Endothelial cell of umbilical vein (primary cell): ENCODE measurements at regions of chr5 and their contacts with region 1.

Region 1: DNA sequence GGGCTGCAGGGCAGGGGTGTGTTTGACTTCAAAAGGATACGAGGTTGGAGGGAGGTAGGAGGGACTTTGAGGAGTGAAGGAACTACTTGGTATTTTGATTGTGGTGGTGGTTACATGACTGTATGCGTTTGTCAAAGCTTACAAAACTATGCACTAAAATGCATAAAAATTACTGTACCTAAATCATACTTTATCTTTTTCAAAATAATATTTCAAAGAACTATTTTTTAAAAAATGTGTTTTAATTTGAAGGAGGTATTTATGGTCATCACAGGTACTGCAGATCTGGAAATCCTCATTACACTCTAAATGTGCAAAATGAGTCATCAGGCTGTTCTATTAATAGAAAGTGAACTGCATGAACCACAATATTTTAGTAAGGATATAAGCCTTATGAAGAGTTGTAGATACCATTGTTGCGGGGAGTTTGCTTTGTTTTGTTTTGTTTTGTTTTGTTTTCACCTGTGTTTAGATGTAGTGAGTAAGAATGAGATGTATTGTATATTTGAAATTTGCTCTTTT is 116.9 kb downstream of the ARRDC3 start:
- DNase-seq: peak; percentile 77
- H3K4me3 ChIP-seq: no peak overlapping the region
- H3K27ac ChIP-seq: peak overlapping the region; percentile 11
- H3K4me1 ChIP-seq: peaks cover 10% of the 10 kb centered on the region
- H3K27me3 ChIP-seq: no peaks in the 10 kb centered on the region
- CTCF ChIP-seq: no peak
- POLR2A ChIP-seq: no peak

Region 2: GRCh38 chr5:91162534-91163381 is 103.5 kb before region 1 on chr5:
- CTCF ChIA-PET with region 1: no interaction called
- POLR2A ChIA-PET with region 1: no interaction called
- dilution Hi-C with region 1: no loop called
- intact Hi-C with region 1: loop called (anchors 5 kb)
- DNase-seq: peak; percentile 98
- H3K4me3 ChIP-seq: no peak overlapping the region
- H3K27ac ChIP-seq: peak overlapping the region; percentile 84
- H3K4me1 ChIP-seq: peaks cover 42% of the 10 kb centered on the region
- H3K27me3 ChIP-seq: no peaks in the 10 kb centered on the region
- CTCF ChIP-seq: no peak
- POLR2A ChIP-seq: no peak